Head of caudate nucleus (tissue), 42 donors: ENCODE measurements at regions of chr12 and their contacts with region 1.

Region 1: DNA sequence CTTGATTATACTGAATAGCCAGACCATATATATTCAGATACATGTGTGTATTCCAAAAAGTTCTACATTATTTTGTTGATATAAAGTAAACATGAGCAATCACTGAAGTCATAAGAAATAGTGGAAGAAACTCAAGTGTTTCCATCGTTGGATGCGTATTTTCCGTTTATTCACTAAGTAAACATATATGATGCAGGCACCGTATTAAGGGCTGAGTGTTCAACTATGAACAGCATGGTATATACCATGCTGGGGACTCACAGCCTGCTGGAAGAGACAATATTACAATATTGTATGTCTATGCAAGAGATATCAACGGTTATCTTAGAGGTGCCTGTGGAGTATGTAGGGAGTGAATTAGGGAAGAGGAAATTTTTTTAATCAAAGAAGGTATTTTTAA is 1.2 kb downstream of the PYROXD1 start:
- DNase-seq: no peak

Region 2: DNA sequence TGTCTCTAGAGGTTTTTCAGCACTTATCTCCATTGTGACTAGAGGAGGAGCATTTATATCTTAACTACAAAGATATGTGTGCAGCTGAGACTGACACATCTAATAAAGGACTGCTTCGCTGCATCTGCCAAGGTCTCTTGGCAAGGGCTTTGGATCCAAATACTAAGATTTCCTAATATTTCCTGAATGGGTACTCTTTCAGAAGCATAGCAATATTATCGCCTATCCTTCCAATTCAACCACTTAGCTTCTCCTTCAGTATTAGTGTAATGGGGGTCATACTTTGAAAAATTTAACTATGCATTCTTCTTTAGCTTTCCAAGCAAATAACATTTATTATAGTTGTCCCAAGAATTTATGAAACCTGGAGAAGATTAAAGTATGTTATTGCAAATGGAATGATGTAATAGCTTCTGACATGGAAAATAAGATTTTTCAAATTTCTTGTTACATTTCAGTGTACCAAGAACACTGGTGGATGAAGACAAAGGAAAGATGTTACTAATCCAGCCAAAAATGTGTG is 1313.3 kb before region 1 on chr12:
- intact Hi-C with region 1: no loop called
- DNase-seq: no peak

Region 3: GRCh38 chr12:21252070-21252469 is 186.6 kb before region 1 on chr12:
- intact Hi-C with region 1: loop called (anchors 10 kb)
- DNase-seq: no peak

Region 4: GRCh38 chr12:21308785-21309184 is 129.9 kb before region 1 on chr12:
- intact Hi-C with region 1: loop called (anchors 5 kb)
- DNase-seq: peak in 1 of 42 donors; percentile 31